CD4-positive, alpha-beta T cell (primary cell): ENCODE measurements at regions of chr22 and their contacts with region 1.

Region 1: GRCh38 chr22:50185384-50186087 is at the start of gene TRABD:
- DNase-seq: peak; percentile 77 to 96 (median 88)
- ATAC-seq: peak; percentile 67
- H3K4me3 ChIP-seq: peak within 1 kb of the TSS; percentile 62
- H3K4me3 Mint-ChIP-seq: peak within 1 kb of the TSS; percentile 95
- H3K27ac ChIP-seq: peak within 1 kb of the TSS; percentile 56 to 60
- H3K27ac Mint-ChIP-seq: peak within 1 kb of the TSS; percentile 96
- H3K4me1 ChIP-seq: peaks cover 53% of the 10 kb centered on the region
- H3K4me1 Mint-ChIP-seq: peaks cover 25% of the 10 kb centered on the region
- H3K27me3 ChIP-seq: peaks cover 0 to 2% of the 10 kb centered on the region in 2 experiments
- H3K27me3 Mint-ChIP-seq: peaks cover 4% of the 10 kb centered on the region
- CTCF ChIP-seq: no peak
- total RNA-seq, gene TRABD: 184 to 193 TPM

Region 2: GRCh38 chr22:49917974-49918910 is 267.3 kb before region 1 on chr22 and contains the starts of genes ALG12 and CRELD2:
- CTCF ChIA-PET with region 1: no interaction called
- POLR2A ChIA-PET with region 1: no interaction called
- intact Hi-C with region 1: loop called in 1 of 2 experiments (anchors 5 kb)
- DNase-seq: peak; percentile 93 to 98 (median 96)
- ATAC-seq: peak; percentile 99
- H3K4me3 ChIP-seq: peak within 1 kb of the TSS; percentile 89
- H3K4me3 Mint-ChIP-seq: peak within 1 kb of the TSS; percentile 95
- H3K27ac ChIP-seq: peak within 1 kb of the TSS; percentile 58 to 83
- H3K27ac Mint-ChIP-seq: peak within 1 kb of the TSS; percentile 85
- H3K4me1 ChIP-seq: peaks cover 24% of the 10 kb centered on the region
- H3K4me1 Mint-ChIP-seq: peaks cover 21% of the 10 kb centered on the region
- H3K27me3 ChIP-seq: no peaks in the 10 kb centered on the region
- H3K27me3 Mint-ChIP-seq: no peaks in the 10 kb centered on the region
- CTCF ChIP-seq: no peak
- total RNA-seq, gene ALG12: 13.5 to 14.6 TPM
- total RNA-seq, gene CRELD2: 21.2 to 23.3 TPM

Region 3: GRCh38 chr22:49936018-49936952 is 249.3 kb before region 1 on chr22:
- CTCF ChIA-PET with region 1: no interaction called
- POLR2A ChIA-PET with region 1: no interaction called
- intact Hi-C with region 1: loop called (anchors 5 to 10 kb)
- DNase-seq: peak; percentile 85 to 97 (median 92)
- ATAC-seq: peak; percentile 74
- H3K4me3 ChIP-seq: peak overlapping the region; percentile 47
- H3K4me3 Mint-ChIP-seq: peak overlapping the region; percentile 76
- H3K27ac ChIP-seq: peak overlapping the region; percentile 86 to 88
- H3K27ac Mint-ChIP-seq: peak overlapping the region; percentile 87
- H3K4me1 ChIP-seq: peaks cover 58% of the 10 kb centered on the region
- H3K4me1 Mint-ChIP-seq: peaks cover 13% of the 10 kb centered on the region
- H3K27me3 ChIP-seq: no peaks in the 10 kb centered on the region
- H3K27me3 Mint-ChIP-seq: no peaks in the 10 kb centered on the region
- CTCF ChIP-seq: no peak

Region 4: GRCh38 chr22:50030297-50031188 is 155.0 kb before region 1 on chr22:
- CTCF ChIA-PET with region 1: no interaction called
- POLR2A ChIA-PET with region 1: no interaction called
- intact Hi-C with region 1: no loop called
- DNase-seq: peak; percentile 69 to 93 (median 78)
- ATAC-seq: peak; percentile 95
- H3K4me3 ChIP-seq: no peak overlapping the region
- H3K4me3 Mint-ChIP-seq: no peak overlapping the region
- H3K27ac ChIP-seq: no peak overlapping the region
- H3K27ac Mint-ChIP-seq: no peak overlapping the region
- H3K4me1 ChIP-seq: peaks cover 23% of the 10 kb centered on the region
- H3K4me1 Mint-ChIP-seq: peaks cover 7% of the 10 kb centered on the region
- H3K27me3 ChIP-seq: peaks cover 9 to 22% of the 10 kb centered on the region in 2 experiments
- H3K27me3 Mint-ChIP-seq: peaks cover 14% of the 10 kb centered on the region
- CTCF ChIP-seq: peak; percentile 86

Region 5: DNA sequence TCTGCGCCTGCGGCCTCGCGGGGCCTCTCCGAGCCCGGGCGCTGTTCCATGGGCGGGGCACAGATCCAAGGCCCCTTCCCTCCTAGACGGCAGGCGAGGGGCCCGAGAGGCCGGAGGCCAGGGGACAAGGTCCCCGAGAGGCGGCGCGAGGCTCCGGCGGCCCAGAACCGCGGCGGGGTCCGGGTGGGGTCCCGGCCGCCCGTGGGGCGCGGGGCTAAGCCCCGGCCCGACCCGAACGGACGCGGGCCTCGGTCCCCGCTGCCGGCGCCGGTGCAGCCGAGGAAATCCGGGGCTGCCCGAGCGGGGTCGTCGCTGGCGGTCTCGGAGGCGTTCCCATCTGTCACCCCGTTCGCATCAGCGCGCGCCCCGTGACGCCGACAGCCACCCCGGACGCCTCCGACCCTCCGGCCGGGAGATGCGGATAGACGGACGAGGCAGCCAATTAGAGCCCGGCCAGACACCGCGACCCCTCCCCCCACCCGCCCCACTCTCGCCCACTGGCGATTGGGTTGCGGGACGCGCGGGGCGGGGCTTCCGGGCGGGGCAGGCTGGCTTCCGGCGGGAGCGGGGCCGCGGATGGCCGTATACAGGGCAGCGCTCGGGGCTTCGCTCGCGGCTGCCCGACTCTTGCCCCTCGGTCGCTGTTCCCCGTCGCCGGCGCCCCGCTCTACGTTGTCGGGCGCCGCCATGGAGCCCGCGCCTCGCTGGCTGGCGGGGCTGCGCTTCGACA is 15.1 kb after region 1 on chr22 and contains the start of gene SELENOO:
- CTCF ChIA-PET with region 1: interaction called, 13 read pairs
- POLR2A ChIA-PET with region 1: interaction called, 15 read pairs
- intact Hi-C with region 1: loop called in 1 of 2 experiments (anchors 2 kb)
- DNase-seq: peak; percentile 76 to 96 (median 90)
- ATAC-seq: peak; percentile 80
- H3K4me3 ChIP-seq: peak within 1 kb of the TSS; percentile 60
- H3K4me3 Mint-ChIP-seq: peak within 1 kb of the TSS; percentile 91
- H3K27ac ChIP-seq: peak within 1 kb of the TSS in 1 of 2 donors; percentile 40
- H3K27ac Mint-ChIP-seq: peak within 1 kb of the TSS; percentile 85
- H3K4me1 ChIP-seq: peaks cover 27% of the 10 kb centered on the region
- H3K4me1 Mint-ChIP-seq: peaks cover 27% of the 10 kb centered on the region
- H3K27me3 ChIP-seq: no peaks in the 10 kb centered on the region
- H3K27me3 Mint-ChIP-seq: no peaks in the 10 kb centered on the region
- CTCF ChIP-seq: no peak
- total RNA-seq, gene SELENOO: 26.0 to 26.1 TPM

Region 6: DNA sequence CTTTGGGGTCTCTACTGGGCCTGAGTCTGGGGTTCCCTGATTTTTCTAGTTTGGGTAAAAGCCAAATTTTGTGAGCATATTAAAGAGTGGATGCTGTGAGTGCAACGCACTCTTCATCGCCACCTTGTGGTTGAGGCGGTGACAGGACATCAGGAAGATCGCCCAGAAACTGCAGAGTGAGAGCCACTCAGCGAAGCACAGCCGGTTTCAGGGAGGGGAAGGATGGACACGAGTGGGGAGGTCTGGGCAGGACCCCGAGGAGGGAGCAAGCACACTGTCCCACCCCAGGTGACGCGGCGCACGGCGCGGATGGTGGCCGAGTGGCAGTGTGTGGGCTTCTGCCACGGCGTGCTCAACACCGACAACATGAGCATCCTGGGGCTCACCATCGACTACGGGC is 24.4 kb after region 1 on chr22:
- CTCF ChIA-PET with region 1: interaction called, 13 read pairs
- POLR2A ChIA-PET with region 1: interaction called, 9 read pairs
- intact Hi-C with region 1: loop called in 1 of 2 experiments (anchors 2 kb)
- DNase-seq: peak; percentile 59 to 88 (median 68)
- ATAC-seq: peak; percentile 82
- H3K4me3 ChIP-seq: no peak overlapping the region
- H3K4me3 Mint-ChIP-seq: peak overlapping the region; percentile 11
- H3K27ac ChIP-seq: no peak overlapping the region
- H3K27ac Mint-ChIP-seq: peak overlapping the region; percentile 78
- H3K4me1 ChIP-seq: peaks cover 20% of the 10 kb centered on the region
- H3K4me1 Mint-ChIP-seq: peaks cover 26% of the 10 kb centered on the region
- H3K27me3 ChIP-seq: no peaks in the 10 kb centered on the region
- H3K27me3 Mint-ChIP-seq: no peaks in the 10 kb centered on the region
- CTCF ChIP-seq: peak; percentile 70

Region 7: GRCh38 chr22:50227579-50228215 is 42.2 kb after region 1 on chr22:
- CTCF ChIA-PET with region 1: no interaction called
- POLR2A ChIA-PET with region 1: no interaction called
- intact Hi-C with region 1: no loop called
- DNase-seq: peak in 1 of 14 experiments; percentile 23
- ATAC-seq: no peak
- H3K4me3 ChIP-seq: no peak overlapping the region
- H3K4me3 Mint-ChIP-seq: no peak overlapping the region
- H3K27ac ChIP-seq: no peak overlapping the region
- H3K27ac Mint-ChIP-seq: no peak overlapping the region
- H3K4me1 ChIP-seq: no peaks in the 10 kb centered on the region
- H3K4me1 Mint-ChIP-seq: peaks cover 4% of the 10 kb centered on the region
- H3K27me3 ChIP-seq: no peaks in the 10 kb centered on the region
- H3K27me3 Mint-ChIP-seq: no peaks in the 10 kb centered on the region
- CTCF ChIP-seq: no peak

Region 8: DNA sequence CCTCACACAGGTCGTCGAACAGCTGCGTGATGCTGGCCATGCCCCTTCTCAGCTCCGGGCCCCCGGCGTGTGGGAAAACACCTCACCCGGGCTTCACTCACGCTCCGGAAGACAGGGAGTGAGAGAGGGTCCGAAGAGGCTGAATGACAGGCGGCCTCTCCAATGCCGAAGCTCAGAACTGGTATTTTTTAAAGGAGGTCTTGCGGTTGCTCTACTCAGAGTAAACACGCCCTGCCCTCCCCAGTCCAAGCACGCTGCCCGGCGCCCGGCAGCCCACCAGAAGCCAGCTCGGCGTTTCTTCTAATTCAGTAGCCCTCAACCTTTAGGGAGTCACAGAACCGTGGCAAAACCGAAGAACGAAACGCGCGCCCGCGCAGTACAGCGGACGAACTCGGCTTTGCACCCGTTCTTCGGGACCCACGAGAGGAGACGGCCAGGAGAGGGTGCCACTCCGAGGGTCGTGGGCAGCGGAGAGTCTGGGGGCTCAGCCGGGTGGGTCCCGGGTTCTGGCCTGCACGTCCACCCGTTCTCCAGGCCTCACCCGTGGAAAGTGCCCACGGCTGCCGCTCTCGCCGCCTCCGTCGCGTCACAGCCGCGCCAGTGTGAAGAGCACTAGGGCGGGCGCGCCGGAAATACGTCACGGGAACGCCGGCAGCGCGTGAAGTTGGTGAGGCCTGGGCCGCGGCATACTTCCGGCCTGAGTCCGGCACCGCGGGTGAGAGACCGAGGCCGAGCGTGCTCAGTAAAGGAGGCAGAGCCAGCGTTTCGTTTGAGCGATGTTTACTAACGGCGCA is 59.1 kb after region 1 on chr22 and contains the start of gene TUBGCP6:
- CTCF ChIA-PET with region 1: no interaction called
- POLR2A ChIA-PET with region 1: interaction called, 6 read pairs
- intact Hi-C with region 1: loop called in 1 of 2 experiments (anchors 5 kb)
- DNase-seq: peak; percentile 76 to 97 (median 90)
- ATAC-seq: peak; percentile 73
- H3K4me3 ChIP-seq: peak within 1 kb of the TSS; percentile 100
- H3K4me3 Mint-ChIP-seq: peak within 1 kb of the TSS; percentile 99
- H3K27ac ChIP-seq: peak within 1 kb of the TSS; percentile 98
- H3K27ac Mint-ChIP-seq: peak within 1 kb of the TSS; percentile 89
- H3K4me1 ChIP-seq: peaks cover 92% of the 10 kb centered on the region
- H3K4me1 Mint-ChIP-seq: peaks cover 47% of the 10 kb centered on the region
- H3K27me3 ChIP-seq: no peaks in the 10 kb centered on the region
- H3K27me3 Mint-ChIP-seq: no peaks in the 10 kb centered on the region
- CTCF ChIP-seq: peak; percentile 33
- total RNA-seq, gene TUBGCP6: 124 to 126 TPM

Region 9: GRCh38 chr22:50444663-50445062 is 259.1 kb after region 1 on chr22:
- CTCF ChIA-PET with region 1: no interaction called
- POLR2A ChIA-PET with region 1: no interaction called
- intact Hi-C with region 1: no loop called
- DNase-seq: no peak
- ATAC-seq: no peak
- H3K4me3 ChIP-seq: no peak overlapping the region
- H3K4me3 Mint-ChIP-seq: no peak overlapping the region
- H3K27ac ChIP-seq: peak overlapping the region in 1 of 2 donors; percentile 48
- H3K27ac Mint-ChIP-seq: peak overlapping the region; percentile 69
- H3K4me1 ChIP-seq: peaks cover 25% of the 10 kb centered on the region
- H3K4me1 Mint-ChIP-seq: no peaks in the 10 kb centered on the region
- H3K27me3 ChIP-seq: no peaks in the 10 kb centered on the region
- H3K27me3 Mint-ChIP-seq: no peaks in the 10 kb centered on the region
- CTCF ChIP-seq: no peak